ENCODE measurements at regions of chr20 and their contacts with region 1.

Region 1: GRCh38 chr20:45798935-45799642 is 7.3 kb downstream of the DNTTIP1 start:
- DNase-seq: peak in 1 of 2 experiments; percentile 70
- H3K4me3 ChIP-seq: no peak overlapping the region
- H3K27ac ChIP-seq: peak overlapping the region; percentile 31
- H3K4me1 ChIP-seq: no peaks in the 10 kb centered on the region
- H3K27me3 ChIP-seq: no peaks in the 10 kb centered on the region
- CTCF ChIP-seq: peak; percentile 82

Region 2: GRCh38 chr20:45742581-45742980 is 56.5 kb before region 1 on chr20:
- CTCF ChIA-PET with region 1: no interaction called
- POLR2A ChIA-PET with region 1: no interaction called
- intact Hi-C with region 1: no loop called
- DNase-seq: no peak
- H3K4me3 ChIP-seq: no peak overlapping the region
- H3K27ac ChIP-seq: no peak overlapping the region
- H3K4me1 ChIP-seq: no peaks in the 10 kb centered on the region
- H3K27me3 ChIP-seq: no peaks in the 10 kb centered on the region
- CTCF ChIP-seq: no peak

Region 3: GRCh38 chr20:45867819-45868176 is 68.7 kb after region 1 on chr20:
- CTCF ChIA-PET with region 1: interaction called, 20 read pairs
- POLR2A ChIA-PET with region 1: no interaction called
- intact Hi-C with region 1: no loop called
- DNase-seq: peak in 1 of 2 experiments; percentile 93
- H3K4me3 ChIP-seq: no peak overlapping the region
- H3K27ac ChIP-seq: peak overlapping the region; percentile 41
- H3K4me1 ChIP-seq: peaks cover 28% of the 10 kb centered on the region
- H3K27me3 ChIP-seq: no peaks in the 10 kb centered on the region
- CTCF ChIP-seq: no peak

Region 4: GRCh38 chr20:45880988-45881788 is 82.1 kb after region 1 on chr20 and contains the start of gene ZSWIM1:
- CTCF ChIA-PET with region 1: interaction called, 3 read pairs
- POLR2A ChIA-PET with region 1: interaction called, 12 read pairs
- intact Hi-C with region 1: no loop called
- DNase-seq: peak; percentile 98 to 99
- H3K4me3 ChIP-seq: peak within 1 kb of the TSS; percentile 67
- H3K27ac ChIP-seq: peak within 1 kb of the TSS; percentile 14; the same call in 1 of the 2 replicates
- H3K4me1 ChIP-seq: peaks cover 31% of the 10 kb centered on the region
- H3K27me3 ChIP-seq: no peaks in the 10 kb centered on the region
- CTCF ChIP-seq: no peak
- total RNA-seq, gene ZSWIM1: 13.2 and 13.5 TPM in 2 replicates

Region 5: DNA sequence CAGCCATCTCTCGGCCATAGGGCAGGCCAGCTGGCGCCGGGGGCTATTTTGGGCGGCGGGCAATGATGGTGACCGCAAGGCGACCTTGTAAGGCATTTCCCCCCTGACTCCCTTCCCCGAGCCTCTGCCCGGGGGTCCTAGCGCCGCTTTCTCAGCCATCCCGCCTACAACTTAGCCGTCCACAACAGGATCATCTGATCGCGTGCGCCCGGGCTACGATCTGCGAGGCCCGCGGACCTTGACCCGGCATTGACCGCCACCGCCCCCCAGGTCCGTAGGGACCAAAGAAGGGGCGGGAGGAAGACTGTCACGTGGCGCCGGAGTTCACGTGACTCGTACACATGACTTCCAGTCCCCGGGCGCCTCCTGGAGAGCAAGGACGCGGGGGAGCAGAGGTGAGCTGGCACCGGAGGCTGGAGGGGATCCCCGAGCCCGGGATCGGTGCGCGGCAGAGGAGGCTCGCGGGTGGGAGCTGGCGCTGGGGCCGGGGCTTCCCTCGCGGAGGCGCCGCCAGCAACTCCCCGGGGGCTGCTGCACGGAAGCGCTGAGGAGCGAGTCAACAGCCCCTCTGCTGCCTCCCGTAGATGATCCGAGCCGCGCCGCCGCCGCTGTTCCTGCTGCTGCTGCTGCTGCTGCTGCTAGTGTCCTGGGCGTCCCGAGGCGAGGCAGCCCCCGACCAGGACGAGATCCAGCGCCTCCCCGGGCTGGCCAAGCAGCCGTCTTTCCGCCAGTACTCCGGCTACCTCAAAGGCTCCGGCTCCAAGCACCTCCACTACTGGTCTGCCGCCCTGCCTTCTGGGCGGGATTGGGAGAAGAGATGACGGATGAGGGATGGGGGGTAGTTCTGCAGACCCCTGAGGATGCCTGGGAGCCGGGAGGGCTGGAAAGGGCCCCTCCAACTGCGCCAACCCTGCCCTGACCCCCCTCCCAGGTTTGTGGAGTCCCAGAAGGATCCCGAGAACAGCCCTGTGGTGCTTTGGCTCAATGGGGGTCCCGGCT is 92.2 kb after region 1 on chr20 and contains the starts of genes CTSA and NEURL2:
- CTCF ChIA-PET with region 1: no interaction called
- POLR2A ChIA-PET with region 1: no interaction called
- intact Hi-C with region 1: loop called (anchors 2 kb)
- DNase-seq: peak; percentile 81 to 90
- H3K4me3 ChIP-seq: peak within 1 kb of the TSS; percentile 82
- H3K27ac ChIP-seq: no peak within 1 kb of the TSS
- H3K4me1 ChIP-seq: peaks cover 14% of the 10 kb centered on the region; the same call in 1 of the 2 replicates
- H3K27me3 ChIP-seq: no peaks in the 10 kb centered on the region
- CTCF ChIP-seq: no peak; the same call in 1 of the 2 replicates
- total RNA-seq, gene CTSA: 123 and 132 TPM in 2 replicates
- total RNA-seq, gene NEURL2: 6.5 and 9.2 TPM in 2 replicates

Region 6: GRCh38 chr20:45963059-45964005 is 164.2 kb after region 1 on chr20:
- CTCF ChIA-PET with region 1: interaction called, 3 read pairs
- POLR2A ChIA-PET with region 1: no interaction called
- intact Hi-C with region 1: loop called (anchors 1 kb)
- DNase-seq: peak; percentile 38 to 58
- H3K4me3 ChIP-seq: no peak overlapping the region
- H3K27ac ChIP-seq: no peak overlapping the region
- H3K4me1 ChIP-seq: no peaks in the 10 kb centered on the region
- H3K27me3 ChIP-seq: no peaks in the 10 kb centered on the region
- CTCF ChIP-seq: peak; percentile 67

Region 7: DNA sequence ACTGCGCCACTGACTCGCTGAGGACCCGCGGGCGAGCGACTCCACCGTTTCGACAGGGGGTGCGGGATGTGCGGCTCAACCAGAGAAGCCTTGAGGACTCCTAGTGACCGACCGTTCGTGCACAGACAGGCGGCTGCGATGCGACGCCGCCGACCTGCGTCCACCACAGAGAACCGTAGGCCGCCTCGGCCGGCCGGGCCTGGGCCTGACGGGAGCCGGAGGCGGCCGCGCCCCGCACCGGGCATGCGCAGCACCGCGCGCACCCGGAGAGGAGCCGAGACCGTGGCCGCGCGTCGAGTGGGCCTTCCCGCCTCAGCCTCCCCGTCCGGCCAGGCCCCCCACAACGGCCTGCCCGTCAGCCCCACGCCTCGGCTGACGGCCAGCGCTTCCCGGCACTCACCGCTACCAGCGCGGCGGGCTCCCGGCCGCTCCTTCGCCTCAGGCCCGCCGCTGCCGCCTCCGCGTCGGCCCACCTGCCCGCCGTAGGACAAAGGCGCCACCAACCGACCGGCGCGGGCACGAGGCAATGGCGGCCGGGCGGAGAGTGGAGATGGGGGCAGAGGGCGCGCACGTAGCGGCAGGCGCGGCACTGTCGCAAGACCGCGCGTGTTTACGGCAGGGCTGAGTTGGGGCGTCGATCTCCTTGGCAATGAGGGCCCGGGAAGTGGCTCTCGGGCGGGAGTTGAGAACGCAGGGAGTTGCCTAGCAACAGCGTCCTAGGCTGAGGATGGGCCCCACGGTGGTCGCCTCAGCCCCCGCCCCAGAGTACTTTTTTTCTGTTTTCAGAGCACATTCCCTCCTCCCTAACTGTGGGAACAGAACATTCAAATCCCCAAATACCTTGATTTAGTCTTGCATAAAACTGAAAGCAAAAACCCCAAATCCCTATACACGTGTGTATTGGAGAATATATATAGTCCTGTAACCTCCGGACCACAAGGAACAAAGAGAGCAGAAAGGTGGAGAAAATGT is 290.6 kb after region 1 on chr20 and contains the start of gene NCOA5:
- CTCF ChIA-PET with region 1: no interaction called
- POLR2A ChIA-PET with region 1: no interaction called
- intact Hi-C with region 1: loop called (anchors 10 kb)
- DNase-seq: peak; percentile 86 to 97
- H3K4me3 ChIP-seq: peak within 1 kb of the TSS; percentile 85
- H3K27ac ChIP-seq: peak within 1 kb of the TSS; percentile 83
- H3K4me1 ChIP-seq: peaks cover 43% of the 10 kb centered on the region
- H3K27me3 ChIP-seq: no peaks in the 10 kb centered on the region
- CTCF ChIP-seq: no peak; the same call in 1 of the 2 replicates
- total RNA-seq, gene NCOA5: 15.8 and 28.1 TPM in 2 replicates

Region 8: GRCh38 chr20:46970923-46971616 is 1172.0 kb after region 1 on chr20:
- CTCF ChIA-PET with region 1: no interaction called
- POLR2A ChIA-PET with region 1: no interaction called
- intact Hi-C with region 1: no loop called
- DNase-seq: peak in 1 of 2 experiments; percentile 95
- H3K4me3 ChIP-seq: no peak overlapping the region
- H3K27ac ChIP-seq: no peak overlapping the region
- H3K4me1 ChIP-seq: no peaks in the 10 kb centered on the region
- H3K27me3 ChIP-seq: no peaks in the 10 kb centered on the region
- CTCF ChIP-seq: no peak